ENCODE measurements at regions of chr15 and their contacts with region 1.

Region 1: GRCh38 chr15:47812436-47813109 is 95.3 kb downstream of the SEMA6D start:
- DNase-seq: no peak
- H3K4me3 ChIP-seq: no peak overlapping the region
- H3K27ac ChIP-seq: no peak overlapping the region
- H3K4me1 ChIP-seq: no peaks in the 10 kb centered on the region
- H3K27me3 ChIP-seq: no peaks in the 10 kb centered on the region
- CTCF ChIP-seq: no peak

Region 2: DNA sequence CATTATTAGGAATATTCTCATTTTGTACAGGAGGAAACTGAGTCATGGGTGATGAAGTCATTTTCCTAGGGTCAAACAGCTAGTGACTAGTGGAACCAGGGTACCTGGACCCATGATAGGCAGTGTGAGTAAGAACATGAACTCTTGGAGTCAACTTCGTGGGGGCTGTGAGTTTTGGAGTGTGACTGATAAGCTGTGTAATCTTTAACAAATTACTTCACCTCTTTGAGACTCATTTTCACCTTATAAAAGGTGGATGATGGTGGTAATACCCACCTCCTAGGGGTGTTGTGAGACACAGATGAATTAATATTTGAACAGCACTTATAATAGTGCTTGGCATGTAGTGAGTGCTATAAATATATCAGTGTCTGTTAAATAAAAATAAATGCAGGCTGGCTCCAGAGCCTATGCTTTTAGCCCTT is 86.2 kb before region 1 on chr15:
- intact Hi-C with region 1: no loop called
- DNase-seq: no peak
- H3K4me3 ChIP-seq: peak overlapping the region in 1 of 2 donors; percentile 0
- H3K27ac ChIP-seq: peak overlapping the region; percentile 25 to 47
- H3K4me1 ChIP-seq: peaks cover 8 to 38% of the 10 kb centered on the region in 2 donors
- H3K27me3 ChIP-seq: no peaks in the 10 kb centered on the region
- CTCF ChIP-seq: no peak

Region 3: DNA sequence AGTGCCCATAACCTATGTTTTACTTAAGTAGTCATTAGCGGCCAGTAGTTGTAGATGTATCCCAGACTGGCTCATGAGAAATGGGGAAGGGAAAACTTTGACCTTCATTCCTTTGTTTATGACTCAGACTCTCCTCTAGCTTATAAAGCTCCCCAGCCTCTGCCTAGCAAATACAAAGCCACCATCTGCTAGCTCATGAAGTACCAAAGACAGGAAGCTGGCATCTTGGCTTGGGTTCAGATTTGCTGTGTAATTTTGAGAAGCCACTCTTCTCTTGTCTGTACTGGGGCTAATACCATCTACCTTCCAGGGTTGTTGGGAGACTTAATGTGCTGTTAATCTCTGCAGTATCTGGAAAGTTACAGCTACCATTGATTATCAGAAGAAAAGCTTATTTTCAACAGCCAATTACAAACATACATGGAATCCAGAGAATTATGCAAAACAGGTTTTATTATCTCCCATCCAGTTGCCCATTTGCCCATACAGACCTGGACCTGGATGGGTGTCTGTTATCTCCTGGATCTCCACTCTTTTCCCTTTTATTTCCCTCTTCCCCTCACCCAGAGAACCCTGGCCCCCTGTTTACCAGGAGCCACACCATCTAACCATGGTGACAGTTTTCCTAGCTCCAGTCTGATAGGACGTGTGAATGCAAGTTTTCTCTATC is 58.5 kb after region 1 on chr15:
- intact Hi-C with region 1: loop called (anchors 10 kb)
- DNase-seq: no peak
- H3K4me3 ChIP-seq: no peak overlapping the region
- H3K27ac ChIP-seq: peak overlapping the region in 1 of 2 donors; percentile 19
- H3K4me1 ChIP-seq: peaks cover 0 to 3% of the 10 kb centered on the region in 2 donors
- H3K27me3 ChIP-seq: no peaks in the 10 kb centered on the region
- CTCF ChIP-seq: no peak